ENCODE measurements at regions of chr4 and their contacts with region 1.

Region 1: GRCh38 chr4:118740869-118741268 is 55.7 kb downstream of the METTL14 start:
- DNase-seq: no peak
- H3K4me3 Mint-ChIP-seq: no peak overlapping the region
- H3K27ac Mint-ChIP-seq: no peak overlapping the region
- H3K4me1 Mint-ChIP-seq: no peaks in the 10 kb centered on the region
- H3K27me3 Mint-ChIP-seq: no peaks in the 10 kb centered on the region

Region 2: DNA sequence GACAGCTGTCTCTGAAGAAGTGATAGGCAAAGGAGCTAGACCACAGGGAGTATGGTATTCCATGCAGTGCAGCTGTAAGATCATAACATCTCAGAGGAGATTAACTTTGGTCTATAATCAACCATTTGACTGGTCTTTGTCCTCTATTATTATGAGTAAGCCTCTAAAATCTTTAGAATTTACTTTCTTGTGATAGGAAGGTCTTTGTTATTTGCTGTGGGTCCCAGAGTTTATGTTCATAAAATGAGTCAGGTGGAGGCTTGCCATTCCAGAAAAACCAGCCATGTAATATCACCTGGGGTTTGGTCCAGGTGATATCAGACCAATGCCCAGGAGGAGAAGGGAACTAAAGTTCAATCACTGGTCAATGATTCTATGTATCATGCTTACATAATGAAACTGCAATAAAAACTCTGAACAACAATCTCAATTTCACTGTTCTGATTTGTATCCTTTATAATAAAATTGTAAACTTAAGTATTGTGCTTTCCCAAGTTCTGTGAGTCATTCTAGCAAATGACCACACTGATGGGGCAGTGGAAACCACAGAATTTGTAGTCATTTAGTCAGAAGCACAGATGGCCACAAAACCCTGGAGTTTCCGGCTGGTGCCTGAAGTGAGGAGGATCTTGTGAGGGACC is 1415.9 kb before region 1 on chr4:
- CTCF ChIA-PET with region 1: no interaction called
- intact Hi-C with region 1: no loop called
- DNase-seq: no peak
- H3K4me3 Mint-ChIP-seq: no peak overlapping the region
- H3K27ac Mint-ChIP-seq: no peak overlapping the region
- H3K4me1 Mint-ChIP-seq: no peaks in the 10 kb centered on the region
- H3K27me3 Mint-ChIP-seq: no peaks in the 10 kb centered on the region

Region 3: GRCh38 chr4:118826723-118827444 is 86.0 kb after region 1 on chr4:
- CTCF ChIA-PET with region 1: no interaction called
- intact Hi-C with region 1: no loop called
- DNase-seq: no peak
- H3K4me3 Mint-ChIP-seq: no peak overlapping the region
- H3K27ac Mint-ChIP-seq: no peak overlapping the region
- H3K4me1 Mint-ChIP-seq: peaks cover 29% of the 10 kb centered on the region
- H3K27me3 Mint-ChIP-seq: no peaks in the 10 kb centered on the region

Region 4: GRCh38 chr4:118968005-118968404 is 227.1 kb after region 1 on chr4:
- CTCF ChIA-PET with region 1: no interaction called
- intact Hi-C with region 1: loop called (anchors 1 kb)
- DNase-seq: no peak
- H3K4me3 Mint-ChIP-seq: no peak overlapping the region
- H3K27ac Mint-ChIP-seq: no peak overlapping the region
- H3K4me1 Mint-ChIP-seq: peaks cover 7% of the 10 kb centered on the region
- H3K27me3 Mint-ChIP-seq: no peaks in the 10 kb centered on the region

Measured in activated naive CD4-positive, alpha-beta T cell treated with anti-CD3 and anti-CD28 coated beads for 36 hours (primary cell).